MCF 10A (cell line): ENCODE measurements at regions of chrX and their contacts with region 1.

Region 1: DNA sequence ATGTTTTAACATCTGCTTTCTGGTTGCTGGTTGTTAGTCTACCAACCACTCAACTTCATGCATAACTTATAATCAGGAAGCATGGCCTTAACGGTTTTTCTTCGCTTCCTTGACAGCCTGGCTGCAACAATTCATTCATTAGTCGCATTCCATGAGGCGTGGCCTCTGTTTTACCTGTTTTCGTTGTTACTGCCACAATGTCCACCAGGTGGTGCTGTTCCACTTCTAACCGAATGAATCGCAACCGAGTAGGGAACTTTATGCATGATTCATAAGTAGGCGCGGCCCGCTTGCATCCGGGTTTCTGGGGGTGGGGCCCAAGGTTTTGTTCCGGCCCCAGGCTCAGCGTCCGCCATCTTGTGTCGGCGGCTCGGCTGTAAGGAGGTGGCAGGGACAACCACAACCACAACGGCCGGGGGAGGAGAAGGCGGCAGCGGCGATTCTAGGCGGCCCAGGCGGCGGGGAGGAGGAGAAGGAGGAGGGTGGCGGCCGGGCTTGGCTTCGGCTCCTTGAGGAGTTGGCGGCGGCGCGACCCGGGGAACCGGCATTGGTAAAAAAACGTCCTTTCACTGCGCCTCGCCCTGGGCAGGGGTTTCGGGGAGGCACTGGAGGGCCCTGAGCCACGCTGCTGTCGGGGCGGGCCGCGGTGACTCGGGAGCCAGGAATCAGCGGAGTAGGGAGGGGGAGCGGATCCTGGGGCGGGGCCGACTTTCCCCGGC is at the start of gene UBA1:
- DNase-seq: peak; percentile 99
- H3K4me3 Mint-ChIP-seq: peak within 1 kb of the TSS; percentile 98
- H3K27ac Mint-ChIP-seq: peak within 1 kb of the TSS; percentile 99
- H3K4me1 Mint-ChIP-seq: peaks cover 28% of the 10 kb centered on the region
- H3K27me3 Mint-ChIP-seq: peaks cover 4% of the 10 kb centered on the region
- CTCF ChIP-seq: peak; percentile 60
- total RNA-seq, gene UBA1: 248 and 293 TPM in 2 replicates

Region 2: GRCh38 chrX:47179221-47179920 is 14.3 kb before region 1 on chrX:
- CTCF ChIA-PET with region 1: interaction called, 5 read pairs
- POLR2A ChIA-PET with region 1: interaction called, 13 read pairs
- intact Hi-C with region 1: no loop called
- DNase-seq: peak; percentile 84
- H3K4me3 Mint-ChIP-seq: no peak overlapping the region
- H3K27ac Mint-ChIP-seq: no peak overlapping the region
- H3K4me1 Mint-ChIP-seq: peaks cover 19% of the 10 kb centered on the region
- H3K27me3 Mint-ChIP-seq: peaks cover 94% of the 10 kb centered on the region
- CTCF ChIP-seq: no peak

Region 3: GRCh38 chrX:47311932-47312774 is 118.5 kb after region 1 on chrX:
- CTCF ChIA-PET with region 1: interaction called, 9 read pairs
- POLR2A ChIA-PET with region 1: interaction called, 3 read pairs
- intact Hi-C with region 1: loop called (anchors 1 kb)
- DNase-seq: peak; percentile 73
- H3K4me3 Mint-ChIP-seq: no peak overlapping the region
- H3K27ac Mint-ChIP-seq: no peak overlapping the region
- H3K4me1 Mint-ChIP-seq: no peaks in the 10 kb centered on the region
- H3K27me3 Mint-ChIP-seq: peaks cover 38% of the 10 kb centered on the region
- CTCF ChIP-seq: peak; percentile 54

Region 4: GRCh38 chrX:47482512-47483309 is 289.1 kb after region 1 on chrX and contains the start of gene ZNF41:
- CTCF ChIA-PET with region 1: no interaction called
- POLR2A ChIA-PET with region 1: interaction called, 3 read pairs
- intact Hi-C with region 1: loop called (anchors 5 kb)
- DNase-seq: peak; percentile 82
- H3K4me3 Mint-ChIP-seq: peak within 1 kb of the TSS; percentile 84
- H3K27ac Mint-ChIP-seq: peak within 1 kb of the TSS; percentile 90
- H3K4me1 Mint-ChIP-seq: peaks cover 12% of the 10 kb centered on the region
- H3K27me3 Mint-ChIP-seq: no peaks in the 10 kb centered on the region
- CTCF ChIP-seq: no peak
- total RNA-seq, gene ZNF41: 5.6 and 7.0 TPM in 2 replicates

Region 5: DNA sequence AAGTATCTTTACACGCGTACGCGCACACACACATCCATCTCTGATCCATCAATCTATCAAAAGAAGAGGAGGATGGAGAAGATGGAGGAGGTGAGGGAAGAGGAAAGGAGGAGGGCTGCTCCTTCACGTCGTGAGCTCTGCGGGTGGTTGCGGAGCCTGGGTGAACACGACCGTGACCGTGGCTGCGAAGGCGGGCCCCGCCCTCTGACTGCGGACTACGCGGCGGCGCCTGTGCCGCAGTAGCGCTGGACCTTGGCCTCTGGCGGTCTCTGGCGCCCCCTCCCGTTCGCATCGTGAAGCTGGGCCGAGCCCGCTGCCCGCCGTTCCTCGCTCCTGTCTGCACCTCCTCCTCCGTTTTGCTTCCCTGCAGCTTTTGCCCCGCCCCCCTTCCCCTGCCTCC is 329.7 kb after region 1 on chrX:
- CTCF ChIA-PET with region 1: no interaction called
- POLR2A ChIA-PET with region 1: interaction called, 4 read pairs
- intact Hi-C with region 1: loop called (anchors 1 kb)
- DNase-seq: peak; percentile 59
- H3K4me3 Mint-ChIP-seq: peak overlapping the region; percentile 57
- H3K27ac Mint-ChIP-seq: no peak overlapping the region
- H3K4me1 Mint-ChIP-seq: no peaks in the 10 kb centered on the region
- H3K27me3 Mint-ChIP-seq: no peaks in the 10 kb centered on the region
- CTCF ChIP-seq: peak; percentile 75